ENCODE measurements at regions of chr4 and their contacts with region 1.

Region 1: GRCh38 chr4:76055016-76055415 is 19.1 kb upstream of the CXCL11 start:
- DNase-seq: peak; percentile 54
- ATAC-seq: peak; percentile 83
- H3K4me3 Mint-ChIP-seq: no peak overlapping the region
- H3K27ac Mint-ChIP-seq: no peak overlapping the region
- H3K4me1 Mint-ChIP-seq: peaks cover 44% of the 10 kb centered on the region
- H3K27me3 Mint-ChIP-seq: peaks cover 23% of the 10 kb centered on the region

Region 2: DNA sequence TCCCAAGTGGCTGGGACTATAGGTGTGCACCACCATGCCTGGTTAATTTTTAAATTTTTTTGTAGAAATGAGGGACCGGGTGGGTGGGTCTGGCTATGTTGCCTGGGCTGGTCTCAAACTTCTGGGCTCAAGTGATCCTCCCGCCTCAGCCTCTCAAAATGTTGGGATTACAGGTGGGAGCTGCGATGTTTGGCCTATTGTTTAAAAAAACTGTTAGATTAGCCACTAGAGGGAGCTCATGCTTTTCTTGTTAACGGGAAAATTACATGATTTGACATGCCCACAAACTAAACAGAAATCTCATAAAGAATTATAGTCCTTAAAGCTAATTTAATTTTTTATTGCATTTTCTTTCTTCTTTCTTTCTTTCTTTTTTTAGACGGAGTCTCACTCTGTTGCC is 59.3 kb before region 1 on chr4:
- CTCF ChIA-PET with region 1: interaction called, 24 read pairs
- POLR2A ChIA-PET with region 1: interaction called, 4 read pairs
- intact Hi-C with region 1: no loop called
- DNase-seq: peak; percentile 16
- ATAC-seq: no peak
- H3K4me3 Mint-ChIP-seq: no peak overlapping the region
- H3K27ac Mint-ChIP-seq: no peak overlapping the region
- H3K4me1 Mint-ChIP-seq: peaks cover 6% of the 10 kb centered on the region
- H3K27me3 Mint-ChIP-seq: no peaks in the 10 kb centered on the region

Region 3: GRCh38 chr4:76148142-76148865 is 93.3 kb after region 1 on chr4 and contains the start of gene NUP54:
- CTCF ChIA-PET with region 1: interaction called, 3 read pairs
- POLR2A ChIA-PET with region 1: no interaction called
- intact Hi-C with region 1: loop called in 1 of 2 experiments (anchors 1 kb)
- DNase-seq: peak; percentile 97
- ATAC-seq: peak; percentile 97
- H3K4me3 Mint-ChIP-seq: peak within 1 kb of the TSS; percentile 86
- H3K27ac Mint-ChIP-seq: peak within 1 kb of the TSS; percentile 89
- H3K4me1 Mint-ChIP-seq: peaks cover 25% of the 10 kb centered on the region
- H3K27me3 Mint-ChIP-seq: no peaks in the 10 kb centered on the region
- total RNA-seq, gene NUP54: 58.2 to 67.3 TPM

Region 4: DNA sequence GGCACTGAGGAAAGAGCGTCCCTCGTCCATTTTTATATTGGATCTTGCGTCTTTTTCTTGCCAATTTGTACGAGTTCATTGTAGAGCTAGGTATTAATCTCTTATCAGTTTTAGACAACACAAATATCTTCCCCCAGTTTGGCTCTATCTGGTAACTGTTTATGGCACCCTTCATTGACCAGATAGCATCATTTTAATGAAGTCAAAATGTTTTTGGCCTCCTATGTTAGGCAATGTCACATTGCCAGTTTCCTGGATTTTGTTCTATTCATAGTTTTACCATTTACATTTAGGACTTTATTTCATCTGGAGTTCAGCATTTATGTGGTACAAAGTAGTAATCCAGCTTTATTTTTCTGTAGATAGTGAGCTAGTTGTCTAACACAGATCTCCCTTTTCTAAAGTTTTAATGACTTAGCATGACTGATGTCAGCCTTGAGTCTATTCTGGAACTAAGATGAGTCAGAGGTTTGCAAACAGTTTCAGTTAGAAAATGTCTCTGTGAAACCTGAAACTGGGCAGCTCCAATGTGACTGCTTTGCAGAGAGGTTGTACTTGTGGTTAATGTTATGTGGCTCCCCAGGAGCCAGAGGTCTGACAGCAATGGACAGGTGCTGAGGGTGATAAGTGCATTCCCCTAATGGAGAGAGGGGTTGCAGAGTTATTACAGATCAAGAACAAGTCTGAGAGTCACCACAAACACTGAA is 246.2 kb after region 1 on chr4:
- CTCF ChIA-PET with region 1: no interaction called
- POLR2A ChIA-PET with region 1: no interaction called
- intact Hi-C with region 1: loop called in 1 of 2 experiments (anchors 2 kb)
- DNase-seq: peak; percentile 55
- ATAC-seq: peak; percentile 94
- H3K4me3 Mint-ChIP-seq: no peak overlapping the region
- H3K27ac Mint-ChIP-seq: no peak overlapping the region
- H3K4me1 Mint-ChIP-seq: peaks cover 29% of the 10 kb centered on the region
- H3K27me3 Mint-ChIP-seq: peaks cover 23% of the 10 kb centered on the region

Region 5: GRCh38 chr4:77586951-77587383 is 1532.0 kb after region 1 on chr4:
- CTCF ChIA-PET with region 1: no interaction called
- POLR2A ChIA-PET with region 1: no interaction called
- intact Hi-C with region 1: loop called (anchors 1 to 5 kb)
- DNase-seq: peak; percentile 87
- ATAC-seq: peak; percentile 94
- H3K4me3 Mint-ChIP-seq: peak overlapping the region; percentile 54
- H3K27ac Mint-ChIP-seq: peak overlapping the region; percentile 84
- H3K4me1 Mint-ChIP-seq: peaks cover 66% of the 10 kb centered on the region
- H3K27me3 Mint-ChIP-seq: peaks cover 16% of the 10 kb centered on the region

Measured in activated CD4-positive, alpha-beta T cell treated with anti-CD3 and anti-CD28 coated beads for 36 hours (primary cell).